ENCODE measurements at regions of chr9 and their contacts with region 1.

Region 1: GRCh38 chr9:75213765-75214164 is 125.5 kb downstream of the OSTF1 start:
- DNase-seq: no peak
- H3K4me3 ChIP-seq: no peak overlapping the region
- H3K27ac ChIP-seq: no peak overlapping the region
- H3K4me1 ChIP-seq: no peaks in the 10 kb centered on the region
- H3K27me3 ChIP-seq: no peaks in the 10 kb centered on the region
- CTCF ChIP-seq: no peak
- POLR2A ChIP-seq: no peak

Region 2: DNA sequence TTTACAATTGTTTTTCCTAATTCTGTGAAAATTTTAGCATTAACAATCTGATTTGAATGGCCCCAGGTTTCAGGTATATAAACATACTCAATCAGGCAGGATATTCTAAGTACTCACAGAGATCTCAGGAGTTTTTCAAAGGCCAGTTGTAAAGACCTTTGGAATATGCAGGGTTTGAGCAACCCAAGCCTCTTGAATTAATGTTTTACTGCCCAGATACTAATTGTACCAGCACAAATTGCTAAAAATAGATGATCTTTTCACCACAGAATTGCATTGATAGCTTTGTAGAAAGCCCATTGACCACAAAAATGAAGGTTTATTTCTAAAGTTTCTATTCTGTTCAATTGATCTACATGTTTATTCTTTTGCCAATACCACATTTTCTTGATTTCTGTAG is 61.0 kb after region 1 on chr9:
- intact Hi-C with region 1: loop called (anchors 2 kb)
- DNase-seq: no peak
- H3K4me3 ChIP-seq: no peak overlapping the region
- H3K27ac ChIP-seq: no peak overlapping the region
- H3K4me1 ChIP-seq: no peaks in the 10 kb centered on the region
- H3K27me3 ChIP-seq: no peaks in the 10 kb centered on the region
- CTCF ChIP-seq: no peak
- POLR2A ChIP-seq: no peak